Activated naive CD4-positive, alpha-beta T cell treated with anti-CD3 and anti-CD28 coated beads for 36 hours (primary cell): ENCODE measurements at regions of chr9 and their contacts with region 1.

Region 1: GRCh38 chr9:35882263-35882848 is 12.2 kb upstream of the OR13J1 start:
- DNase-seq: peak; percentile 89
- H3K4me3 Mint-ChIP-seq: no peak overlapping the region
- H3K27ac Mint-ChIP-seq: no peak overlapping the region
- H3K4me1 Mint-ChIP-seq: no peaks in the 10 kb centered on the region
- H3K27me3 Mint-ChIP-seq: no peaks in the 10 kb centered on the region

Region 2: DNA sequence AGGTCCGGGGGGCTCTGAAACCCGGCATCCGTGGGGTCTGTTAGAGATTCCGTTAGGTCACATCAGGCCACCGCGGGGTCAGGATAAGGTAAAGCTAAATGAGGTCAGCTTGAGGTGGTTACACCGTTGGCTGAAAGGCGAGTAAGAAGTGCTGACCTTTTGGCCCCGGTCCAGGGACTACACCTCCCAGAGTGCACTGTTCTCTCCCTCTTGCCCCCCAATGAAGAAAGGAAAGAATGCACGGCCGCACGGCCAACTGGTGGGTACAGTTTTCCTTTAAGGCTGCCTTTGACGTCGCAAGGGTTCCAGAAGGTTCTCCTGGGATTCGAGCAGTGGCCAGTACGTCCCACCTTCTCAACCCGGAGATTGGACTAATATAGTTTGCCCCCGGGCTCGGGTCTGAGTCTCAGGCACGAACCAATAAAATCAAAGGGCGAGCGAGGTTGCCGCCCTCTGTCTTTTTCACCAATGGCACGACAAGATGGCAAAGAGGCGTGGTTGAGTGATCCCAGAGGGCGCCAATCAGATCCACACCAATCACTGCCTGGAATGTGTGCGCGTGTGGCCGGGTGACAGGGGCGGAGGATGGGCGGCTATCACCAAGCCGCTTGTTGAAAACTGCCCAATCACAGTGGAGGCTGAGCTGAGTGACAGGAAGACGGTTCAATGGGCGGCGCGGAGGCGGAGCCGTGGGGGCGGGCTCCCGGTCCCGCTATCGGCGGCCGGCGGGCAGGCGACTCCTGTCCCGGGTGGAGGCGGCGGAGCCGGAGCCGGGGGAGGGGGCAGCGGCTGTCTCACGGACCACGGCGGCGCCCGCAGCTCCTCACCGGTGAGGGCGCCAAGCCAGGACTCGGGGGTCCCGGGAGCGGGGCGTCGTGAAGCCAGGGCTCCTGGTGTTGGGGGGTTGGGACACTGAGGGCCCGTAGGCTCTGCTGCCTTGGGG is 893.1 kb before region 1 on chr9 and contains the start of gene DNAJB5:
- CTCF ChIA-PET with region 1: no interaction called
- intact Hi-C with region 1: no loop called
- DNase-seq: peak; percentile 99
- H3K4me3 Mint-ChIP-seq: peak within 1 kb of the TSS; percentile 90
- H3K27ac Mint-ChIP-seq: peak within 1 kb of the TSS; percentile 92
- H3K4me1 Mint-ChIP-seq: peaks cover 85% of the 10 kb centered on the region
- H3K27me3 Mint-ChIP-seq: no peaks in the 10 kb centered on the region
- total RNA-seq, gene DNAJB5: 11.4 to 12.0 TPM

Region 3: DNA sequence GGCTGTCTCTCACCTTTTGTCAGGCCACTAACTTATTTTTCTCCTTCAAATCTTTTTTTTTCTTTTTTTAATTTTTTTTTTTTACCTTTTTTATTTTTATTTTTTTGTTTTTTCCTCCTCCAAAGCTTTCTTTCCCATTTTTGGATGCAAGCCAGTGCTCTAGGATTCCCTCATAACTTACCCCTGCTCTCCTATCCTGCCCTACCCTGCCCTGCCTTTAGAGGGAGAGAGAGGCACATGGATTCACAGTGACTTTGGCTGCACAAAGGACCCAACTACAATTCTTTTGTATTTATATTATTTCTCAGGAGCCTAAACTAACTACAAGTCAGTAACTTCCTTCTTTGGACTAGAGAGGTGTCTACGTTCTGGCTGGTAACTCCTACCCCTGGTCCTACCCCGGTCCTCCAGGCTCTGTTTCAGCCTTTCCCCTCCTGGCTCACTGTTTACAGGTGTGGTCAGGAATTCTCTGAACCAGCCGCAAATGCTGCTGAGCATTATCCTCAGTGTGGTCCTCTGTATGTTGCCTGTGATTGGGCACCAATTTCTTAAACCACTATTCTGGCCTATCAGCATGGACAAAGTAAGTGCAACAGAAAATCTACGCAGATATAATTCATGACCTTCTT is 400.9 kb before region 1 on chr9:
- CTCF ChIA-PET with region 1: no interaction called
- intact Hi-C with region 1: loop called (anchors 5 kb)
- DNase-seq: peak; percentile 57
- H3K4me3 Mint-ChIP-seq: no peak overlapping the region
- H3K27ac Mint-ChIP-seq: no peak overlapping the region
- H3K4me1 Mint-ChIP-seq: no peaks in the 10 kb centered on the region
- H3K27me3 Mint-ChIP-seq: peaks cover 6% of the 10 kb centered on the region

Region 4: GRCh38 chr9:35829084-35829763 is 53.1 kb before region 1 on chr9 and contains the start of gene TMEM8B:
- CTCF ChIA-PET with region 1: interaction called, 9 read pairs
- intact Hi-C with region 1: loop called (anchors 1 kb)
- DNase-seq: peak; percentile 96
- H3K4me3 Mint-ChIP-seq: peak within 1 kb of the TSS; percentile 89
- H3K27ac Mint-ChIP-seq: peak within 1 kb of the TSS; percentile 59
- H3K4me1 Mint-ChIP-seq: peaks cover 24% of the 10 kb centered on the region
- H3K27me3 Mint-ChIP-seq: peaks cover 2% of the 10 kb centered on the region
- total RNA-seq, gene TMEM8B: 6.2 to 6.6 TPM

Region 5: DNA sequence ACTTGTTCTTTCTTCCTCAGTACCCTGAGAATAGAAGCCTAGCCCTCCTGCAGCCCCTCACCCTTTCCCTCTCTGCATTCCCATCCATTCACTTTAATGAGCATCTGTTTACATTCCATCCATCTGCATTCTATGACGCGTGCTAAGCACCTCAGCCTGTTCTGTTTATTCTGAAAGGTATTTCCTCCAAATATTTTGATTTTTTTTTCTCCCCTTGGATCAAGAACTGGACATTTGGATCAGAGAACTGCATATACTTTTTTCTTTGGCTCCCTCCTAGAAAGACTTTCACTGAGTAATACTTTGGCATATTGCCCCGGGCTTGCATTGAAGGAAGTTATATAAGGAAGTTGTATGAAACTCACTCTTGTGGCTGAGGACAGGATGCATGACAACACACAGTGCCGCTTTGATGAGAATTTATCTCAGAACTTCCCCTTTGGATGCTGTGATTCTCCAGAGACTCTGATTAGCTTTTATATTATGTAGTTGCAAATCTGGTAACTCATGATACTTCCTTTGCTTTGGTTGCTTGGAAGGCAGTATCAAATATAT is 37.6 kb before region 1 on chr9:
- CTCF ChIA-PET with region 1: interaction called, 11 read pairs
- intact Hi-C with region 1: no loop called
- DNase-seq: peak; percentile 40
- H3K4me3 Mint-ChIP-seq: no peak overlapping the region
- H3K27ac Mint-ChIP-seq: no peak overlapping the region
- H3K4me1 Mint-ChIP-seq: peaks cover 28% of the 10 kb centered on the region
- H3K27me3 Mint-ChIP-seq: no peaks in the 10 kb centered on the region

Region 6: GRCh38 chr9:35859310-35859989 is 22.9 kb before region 1 on chr9:
- CTCF ChIA-PET with region 1: interaction called, 14 read pairs
- intact Hi-C with region 1: no loop called
- DNase-seq: peak; percentile 35
- H3K4me3 Mint-ChIP-seq: no peak overlapping the region
- H3K27ac Mint-ChIP-seq: no peak overlapping the region
- H3K4me1 Mint-ChIP-seq: no peaks in the 10 kb centered on the region
- H3K27me3 Mint-ChIP-seq: peaks cover 9% of the 10 kb centered on the region